Activated T-helper 1 cell treated with anti-CD3 and anti-CD28 coated beads, Interleukin-12 subunit alpha, Interleukin-12 subunit beta, Interleukin-2, Interleukin-4 antibody, amounts not matched to agents 30 ng/mL and 10 ng/mL and 1 ng/mL, durations not matched to agents 14 hours and 24 hours and 36 hours (primary cell): ENCODE measurements at regions of chr10 and their contacts with region 1.

Region 1: GRCh38 chr10:28676968-28677887 is at the start of gene BAMBI:
- DNase-seq: peak; percentile 90
- H3K4me3 Mint-ChIP-seq: peak within 1 kb of the TSS; percentile 82
- H3K27ac Mint-ChIP-seq: no peak within 1 kb of the TSS
- H3K4me1 Mint-ChIP-seq: peaks cover 27% of the 10 kb centered on the region
- H3K27me3 Mint-ChIP-seq: peaks cover 78% of the 10 kb centered on the region
- total RNA-seq, gene BAMBI: 0.23 and 0.81 TPM in 2 replicates

Region 2: DNA sequence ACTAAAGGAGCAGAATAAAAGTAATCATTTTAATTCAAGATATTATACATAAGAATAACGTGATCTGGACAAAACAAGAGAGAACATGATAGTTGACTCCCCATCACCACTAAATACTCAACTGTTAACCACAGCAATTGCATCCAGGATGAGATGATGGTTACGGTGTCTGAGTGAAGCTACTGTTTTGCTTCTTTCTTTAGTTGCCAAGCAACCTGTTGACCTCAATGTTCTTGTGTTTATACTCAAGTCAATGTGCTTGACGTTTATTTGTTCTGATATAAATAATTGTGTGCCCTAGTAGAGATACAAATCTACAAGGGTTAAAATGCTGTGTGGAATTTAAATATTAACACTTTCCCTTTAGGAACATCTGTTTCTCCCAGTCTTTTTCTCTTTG is 342.9 kb before region 1 on chr10:
- intact Hi-C with region 1: loop called (anchors 2 kb)
- DNase-seq: peak; percentile 66
- H3K4me3 Mint-ChIP-seq: peak overlapping the region; percentile 81
- H3K27ac Mint-ChIP-seq: peak overlapping the region; percentile 99
- H3K4me1 Mint-ChIP-seq: peaks cover 67% of the 10 kb centered on the region
- H3K27me3 Mint-ChIP-seq: peaks cover 21% of the 10 kb centered on the region

Region 3: GRCh38 chr10:28754930-28755718 is 77.9 kb after region 1 on chr10:
- intact Hi-C with region 1: no loop called
- DNase-seq: no peak
- H3K4me3 Mint-ChIP-seq: no peak overlapping the region
- H3K27ac Mint-ChIP-seq: no peak overlapping the region
- H3K4me1 Mint-ChIP-seq: no peaks in the 10 kb centered on the region
- H3K27me3 Mint-ChIP-seq: peaks cover 8% of the 10 kb centered on the region

Region 4: DNA sequence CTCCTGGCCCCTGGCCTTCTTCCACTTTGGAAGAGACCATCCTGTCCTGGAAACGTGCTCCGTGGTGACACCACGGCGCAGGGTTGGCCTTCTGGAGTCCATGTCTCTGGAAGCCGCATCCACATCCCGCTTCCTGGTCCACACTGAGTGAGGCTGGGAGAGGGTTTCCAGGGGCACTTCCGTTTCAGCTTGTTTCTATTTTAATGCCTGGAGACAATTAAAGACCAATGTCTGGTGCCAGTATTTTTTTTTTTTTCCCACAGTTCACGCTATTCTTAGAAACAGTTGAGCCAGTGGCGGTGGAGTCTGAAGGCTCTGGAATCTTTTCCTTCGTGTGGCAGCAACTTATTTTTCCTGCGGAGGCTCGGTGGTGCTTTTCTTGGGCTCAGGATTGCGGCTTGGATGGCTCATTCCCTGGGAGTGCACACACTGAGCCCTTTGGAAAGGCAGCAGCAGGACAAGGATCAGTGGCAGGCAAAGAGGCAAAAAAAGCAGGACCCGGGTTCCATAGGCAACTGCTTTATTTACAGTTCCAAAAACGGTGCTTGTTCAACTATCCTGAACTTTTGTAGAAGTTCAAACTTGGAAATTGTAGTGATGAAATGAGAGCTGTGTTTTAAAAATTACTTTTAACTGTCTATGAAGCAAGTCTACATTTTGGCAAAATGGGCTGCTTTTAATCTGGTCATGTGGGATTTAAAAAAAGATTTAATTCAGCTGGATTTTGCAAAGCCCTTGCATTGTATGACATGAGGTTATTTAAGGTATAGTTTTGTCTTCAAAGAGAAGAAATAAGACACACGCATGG is 202.9 kb after region 1 on chr10:
- intact Hi-C with region 1: loop called (anchors 5 kb)
- DNase-seq: no peak
- H3K4me3 Mint-ChIP-seq: no peak overlapping the region
- H3K27ac Mint-ChIP-seq: no peak overlapping the region
- H3K4me1 Mint-ChIP-seq: no peaks in the 10 kb centered on the region
- H3K27me3 Mint-ChIP-seq: peaks cover 10% of the 10 kb centered on the region

Region 5: DNA sequence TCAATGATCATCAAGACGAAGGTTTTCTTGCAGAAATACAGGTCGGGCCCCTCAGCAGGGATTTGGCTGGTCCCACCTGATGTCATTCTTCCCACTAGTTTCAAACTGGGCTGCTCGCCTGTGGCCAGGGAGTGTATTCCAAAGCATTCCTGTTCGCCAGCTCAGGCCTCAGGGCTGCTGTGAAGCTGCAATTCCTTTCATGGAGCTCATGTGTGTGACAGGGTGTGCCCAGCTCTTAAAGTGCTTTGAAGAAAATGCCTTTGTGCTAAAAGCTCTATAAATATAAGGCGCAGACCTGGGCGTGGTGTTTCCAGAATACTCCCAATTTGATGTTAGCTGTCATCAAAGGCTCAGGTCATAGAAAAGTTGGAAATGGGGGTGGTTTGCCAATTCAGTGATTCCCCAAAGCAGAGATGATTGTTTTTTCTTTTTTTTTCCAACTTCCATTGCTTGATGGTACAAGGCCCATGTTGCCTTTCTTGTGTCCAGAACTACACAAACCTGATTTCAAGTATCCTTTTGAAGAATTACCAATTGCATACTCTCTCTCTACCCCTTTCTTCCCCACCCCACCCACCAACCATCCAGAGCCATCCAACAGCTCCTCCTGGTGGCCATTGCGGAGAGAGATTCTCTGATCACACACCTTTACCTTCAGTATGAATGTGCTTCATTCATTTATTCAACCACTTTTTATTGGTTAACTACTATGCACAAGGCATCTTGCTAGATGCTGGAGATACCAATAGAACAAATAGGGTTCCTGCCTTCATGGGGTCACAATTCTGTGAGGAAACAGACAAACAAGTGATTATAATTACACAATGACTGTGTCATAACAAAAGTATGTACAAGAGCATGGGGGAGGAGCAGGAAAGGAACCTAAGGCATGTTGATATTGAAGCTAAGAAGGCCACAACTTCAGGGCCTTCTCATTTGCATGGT is 314.4 kb after region 1 on chr10:
- intact Hi-C with region 1: loop called (anchors 5 kb)
- DNase-seq: no peak
- H3K4me3 Mint-ChIP-seq: no peak overlapping the region
- H3K27ac Mint-ChIP-seq: no peak overlapping the region
- H3K4me1 Mint-ChIP-seq: no peaks in the 10 kb centered on the region
- H3K27me3 Mint-ChIP-seq: no peaks in the 10 kb centered on the region

Region 6: GRCh38 chr10:29105531-29106215 is 428.4 kb after region 1 on chr10:
- intact Hi-C with region 1: no loop called
- DNase-seq: no peak
- H3K4me3 Mint-ChIP-seq: no peak overlapping the region
- H3K27ac Mint-ChIP-seq: no peak overlapping the region
- H3K4me1 Mint-ChIP-seq: peaks cover 11% of the 10 kb centered on the region
- H3K27me3 Mint-ChIP-seq: no peaks in the 10 kb centered on the region

Region 7: GRCh38 chr10:29304264-29305030 is 627.2 kb after region 1 on chr10:
- intact Hi-C with region 1: loop called (anchors 2 kb)
- DNase-seq: no peak
- H3K4me3 Mint-ChIP-seq: no peak overlapping the region
- H3K27ac Mint-ChIP-seq: no peak overlapping the region
- H3K4me1 Mint-ChIP-seq: no peaks in the 10 kb centered on the region
- H3K27me3 Mint-ChIP-seq: peaks cover 2% of the 10 kb centered on the region